Activated naive CD4-positive, alpha-beta T cell treated with anti-CD3 and anti-CD28 coated beads for 36 hours (primary cell): ENCODE measurements at regions of chr12 and their contacts with region 1.

Region 1: DNA sequence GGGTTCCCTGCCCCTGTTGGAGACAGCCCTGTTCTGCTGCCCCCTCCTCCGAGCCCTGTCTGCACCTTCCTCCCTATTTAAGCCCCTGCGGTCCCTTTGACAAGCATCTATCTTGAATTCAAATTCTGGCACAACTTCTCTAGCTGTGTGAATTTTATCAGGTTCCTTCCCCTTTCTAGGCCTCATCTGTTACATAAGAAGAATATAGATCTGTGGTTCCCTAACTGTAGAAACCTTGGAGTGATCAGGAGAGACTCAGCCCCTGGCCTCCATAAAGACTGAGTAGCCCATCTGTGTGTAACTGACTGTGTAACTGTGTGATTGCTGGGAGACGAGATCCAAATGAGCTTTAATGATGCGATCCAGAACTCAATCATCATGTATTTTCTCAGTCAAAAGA is 13.0 kb upstream of the RACGAP1 start:
- DNase-seq: no peak
- H3K4me3 Mint-ChIP-seq: no peak overlapping the region
- H3K27ac Mint-ChIP-seq: no peak overlapping the region
- H3K4me1 Mint-ChIP-seq: peaks cover 5% of the 10 kb centered on the region
- H3K27me3 Mint-ChIP-seq: peaks cover 9% of the 10 kb centered on the region

Region 2: DNA sequence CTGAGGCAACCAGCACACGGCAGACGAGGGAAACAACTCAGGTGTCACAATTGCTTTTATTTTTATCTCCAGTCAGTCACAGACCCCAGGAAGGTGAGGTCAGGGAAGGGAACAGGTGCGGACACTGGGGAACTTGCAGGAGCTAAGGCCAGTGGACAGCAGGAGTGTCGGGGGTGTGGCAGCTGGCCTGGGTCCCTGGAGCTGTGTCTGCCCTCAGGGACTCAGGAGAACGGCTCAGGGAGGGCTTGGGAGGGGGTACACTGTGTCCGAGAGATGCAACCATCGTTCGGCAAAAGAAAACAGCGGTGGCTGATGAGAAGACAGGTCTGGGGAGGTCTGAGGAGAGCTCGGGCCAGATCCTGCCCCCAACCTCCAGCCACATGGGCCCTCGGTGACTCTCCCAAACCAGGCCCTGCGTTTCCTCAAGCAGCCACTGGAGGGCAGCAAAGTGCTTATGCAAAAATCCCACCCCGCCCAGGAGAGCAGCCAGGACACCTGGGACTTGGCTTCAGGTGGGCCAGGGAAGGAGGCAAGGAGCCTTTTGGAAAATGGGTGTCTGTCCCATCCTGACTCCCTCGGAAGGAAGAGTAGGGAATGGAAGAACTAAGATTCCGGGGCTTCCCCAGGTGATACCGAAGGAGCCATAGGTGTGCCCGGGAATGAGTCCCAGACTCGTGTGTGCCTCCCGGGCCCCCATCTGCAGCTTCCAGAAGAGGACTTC is 171.3 kb before region 1 on chr12:
- CTCF ChIA-PET with region 1: interaction called, 13 read pairs
- intact Hi-C with region 1: no loop called
- DNase-seq: peak; percentile 86
- H3K4me3 Mint-ChIP-seq: no peak overlapping the region
- H3K27ac Mint-ChIP-seq: no peak overlapping the region
- H3K4me1 Mint-ChIP-seq: no peaks in the 10 kb centered on the region
- H3K27me3 Mint-ChIP-seq: no peaks in the 10 kb centered on the region

Region 3: GRCh38 chr12:49990273-49990672 is 48.1 kb before region 1 on chr12:
- CTCF ChIA-PET with region 1: interaction called, 11 read pairs
- intact Hi-C with region 1: no loop called
- DNase-seq: no peak
- H3K4me3 Mint-ChIP-seq: no peak overlapping the region
- H3K27ac Mint-ChIP-seq: no peak overlapping the region
- H3K4me1 Mint-ChIP-seq: peaks cover 1% of the 10 kb centered on the region
- H3K27me3 Mint-ChIP-seq: no peaks in the 10 kb centered on the region

Region 4: DNA sequence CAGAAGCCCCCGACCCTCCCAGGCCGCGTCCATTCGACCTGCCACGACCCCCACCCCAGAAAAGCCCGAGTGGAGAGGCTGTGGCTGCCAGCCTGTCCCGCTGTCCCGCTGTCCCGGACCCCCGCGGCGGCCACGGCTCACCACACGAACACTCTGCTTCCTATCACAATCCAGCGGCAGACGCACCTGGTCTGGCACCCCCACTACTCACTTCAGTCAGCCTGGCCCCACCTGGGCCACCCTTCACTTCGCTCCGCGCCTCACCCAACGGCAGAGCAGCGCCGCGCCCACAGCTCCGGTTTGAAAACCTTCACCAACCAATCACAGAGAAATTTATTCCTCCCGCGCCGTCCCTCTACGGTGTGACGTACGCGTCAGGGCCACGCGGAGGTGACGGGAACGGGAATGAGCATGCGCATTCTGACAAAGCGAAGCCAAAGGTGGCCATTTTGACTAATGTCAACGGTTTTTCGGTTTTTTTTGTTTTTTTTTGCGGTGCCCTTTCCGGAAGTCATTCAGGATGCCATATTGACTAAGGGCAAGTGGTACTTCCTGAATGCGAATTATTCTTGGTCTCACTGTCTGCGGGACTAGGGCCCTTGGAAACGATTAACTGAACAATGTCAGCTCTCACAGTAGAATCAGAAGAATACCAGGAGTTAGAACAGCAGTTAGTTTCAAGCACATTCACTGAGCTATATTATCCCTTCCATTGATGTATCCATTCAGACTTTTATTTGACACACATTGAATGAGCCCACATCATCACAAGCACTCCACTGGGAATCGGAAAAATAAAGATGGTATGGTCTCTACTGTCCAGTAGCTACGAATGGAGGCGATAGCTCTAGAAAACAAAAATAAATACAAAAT is 12.9 kb before region 1 on chr12 and contains the start of gene RACGAP1:
- CTCF ChIA-PET with region 1: interaction called, 14 read pairs
- intact Hi-C with region 1: no loop called
- DNase-seq: peak; percentile 98
- H3K4me3 Mint-ChIP-seq: peak within 1 kb of the TSS; percentile 92
- H3K27ac Mint-ChIP-seq: peak within 1 kb of the TSS; percentile 94
- H3K4me1 Mint-ChIP-seq: peaks cover 12% of the 10 kb centered on the region
- H3K27me3 Mint-ChIP-seq: no peaks in the 10 kb centered on the region
- total RNA-seq, gene RACGAP1: 156 to 159 TPM

Region 5: GRCh38 chr12:51475543-51475942 is 1437.2 kb after region 1 on chr12:
- CTCF ChIA-PET with region 1: no interaction called
- intact Hi-C with region 1: no loop called
- DNase-seq: no peak
- H3K4me3 Mint-ChIP-seq: no peak overlapping the region
- H3K27ac Mint-ChIP-seq: no peak overlapping the region
- H3K4me1 Mint-ChIP-seq: peaks cover 12% of the 10 kb centered on the region
- H3K27me3 Mint-ChIP-seq: no peaks in the 10 kb centered on the region